Activated CD4-positive, alpha-beta T cell treated with anti-CD3 and anti-CD28 coated beads, Interleukin-2, amount 10 ng/mL, durations not matched to agents 24 days and 14 days (primary cell): ENCODE measurements at regions of chr2 and their contacts with region 1.

Region 1: GRCh38 chr2:200888704-200889625 is at the starts of genes NIF3L1 and PPIL3:
- DNase-seq: peak; percentile 99
- H3K4me3 Mint-ChIP-seq: peak within 1 kb of the TSS; percentile 92
- H3K27ac Mint-ChIP-seq: peak within 1 kb of the TSS; percentile 99
- H3K4me1 Mint-ChIP-seq: peaks cover 46% of the 10 kb centered on the region
- H3K27me3 Mint-ChIP-seq: no peaks in the 10 kb centered on the region
- total RNA-seq, gene NIF3L1: 30.7 and 33.4 TPM in 2 replicates
- total RNA-seq, gene PPIL3: 52.6 and 52.8 TPM in 2 replicates

Region 2: GRCh38 chr2:200703127-200703925 is 185.6 kb before region 1 on chr2:
- intact Hi-C with region 1: loop called (anchors 1 kb)
- DNase-seq: peak; percentile 80
- H3K4me3 Mint-ChIP-seq: peak overlapping the region; percentile 23
- H3K27ac Mint-ChIP-seq: peak overlapping the region; percentile 78
- H3K4me1 Mint-ChIP-seq: peaks cover 28% of the 10 kb centered on the region
- H3K27me3 Mint-ChIP-seq: no peaks in the 10 kb centered on the region

Region 3: GRCh38 chr2:200864176-200864976 is 24.6 kb before region 1 on chr2 and contains the start of gene CLK1:
- intact Hi-C with region 1: loop called (anchors 1 kb)
- DNase-seq: peak; percentile 99
- H3K4me3 Mint-ChIP-seq: peak within 1 kb of the TSS; percentile 91
- H3K27ac Mint-ChIP-seq: peak within 1 kb of the TSS; percentile 94
- H3K4me1 Mint-ChIP-seq: peaks cover 32% of the 10 kb centered on the region
- H3K27me3 Mint-ChIP-seq: no peaks in the 10 kb centered on the region
- total RNA-seq, gene CLK1: 99.3 and 100 TPM in 2 replicates

Region 4: GRCh38 chr2:201116115-201116958 is 227.4 kb after region 1 on chr2 and contains the start of gene CFLAR:
- intact Hi-C with region 1: loop called (anchors 1 kb)
- DNase-seq: peak; percentile 96
- H3K4me3 Mint-ChIP-seq: peak within 1 kb of the TSS; percentile 96
- H3K27ac Mint-ChIP-seq: peak within 1 kb of the TSS; percentile 97
- H3K4me1 Mint-ChIP-seq: peaks cover 32% of the 10 kb centered on the region
- H3K27me3 Mint-ChIP-seq: no peaks in the 10 kb centered on the region
- total RNA-seq, gene CFLAR: 402 and 415 TPM in 2 replicates

Region 5: DNA sequence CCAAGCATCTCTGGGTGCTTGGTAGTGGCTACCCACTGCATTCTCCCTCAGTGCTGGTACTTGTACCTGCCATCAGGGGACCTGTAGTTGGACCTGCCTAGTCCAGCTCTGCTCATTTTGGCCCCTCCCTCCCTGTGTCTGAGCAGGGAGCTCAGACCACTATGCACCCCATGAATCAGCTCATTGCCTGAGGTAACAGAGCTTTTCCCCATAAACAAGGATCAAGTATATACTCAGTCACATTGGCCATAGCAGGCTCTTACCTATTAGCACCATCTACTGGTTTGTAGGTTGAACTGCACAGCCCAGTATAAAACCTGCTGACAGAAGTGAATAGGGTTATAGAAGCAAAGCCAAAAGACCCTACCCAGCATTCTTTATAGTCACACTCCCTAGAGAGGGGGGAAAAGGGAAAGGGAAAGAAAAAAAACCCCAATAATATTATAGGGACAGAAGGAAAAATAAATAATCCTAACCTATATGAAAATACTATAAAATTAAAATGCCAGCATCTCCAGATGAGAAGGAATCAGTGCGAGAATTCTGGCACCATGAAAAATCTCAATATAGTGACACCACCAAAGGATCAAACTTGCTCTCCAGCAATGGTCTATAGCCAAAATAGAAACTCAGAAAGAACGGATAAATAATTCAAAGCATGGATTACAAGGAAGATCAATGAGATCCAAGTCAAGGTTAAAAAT is 475.0 kb after region 1 on chr2:
- intact Hi-C with region 1: loop called (anchors 5 kb)
- DNase-seq: peak; percentile 82
- H3K4me3 Mint-ChIP-seq: no peak overlapping the region
- H3K27ac Mint-ChIP-seq: peak overlapping the region; percentile 38
- H3K4me1 Mint-ChIP-seq: peaks cover 35% of the 10 kb centered on the region
- H3K27me3 Mint-ChIP-seq: no peaks in the 10 kb centered on the region

Region 6: DNA sequence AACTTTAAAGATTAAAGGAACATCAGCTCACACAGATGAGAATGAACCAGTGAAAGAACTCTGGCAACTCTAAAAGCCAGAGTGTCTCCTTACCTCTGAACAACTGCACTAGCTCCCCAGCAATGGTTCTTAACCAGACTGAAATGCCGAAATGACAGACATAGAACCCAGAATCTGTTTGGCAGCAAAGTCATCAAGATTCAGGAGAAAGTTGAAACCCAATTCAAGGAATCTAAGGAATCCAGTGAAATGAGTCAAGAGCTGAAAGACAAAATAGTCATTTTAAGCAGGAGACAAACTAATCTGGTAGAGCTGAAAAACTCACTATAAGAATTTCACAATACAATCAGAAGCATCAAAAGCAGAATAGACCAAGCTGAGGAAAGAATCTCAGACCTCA is 634.5 kb after region 1 on chr2:
- intact Hi-C with region 1: no loop called
- DNase-seq: no peak
- H3K4me3 Mint-ChIP-seq: no peak overlapping the region
- H3K27ac Mint-ChIP-seq: no peak overlapping the region
- H3K4me1 Mint-ChIP-seq: peaks cover 4% of the 10 kb centered on the region
- H3K27me3 Mint-ChIP-seq: no peaks in the 10 kb centered on the region